ENCODE measurements at regions of chr6 and their contacts with region 1.

Region 1: DNA sequence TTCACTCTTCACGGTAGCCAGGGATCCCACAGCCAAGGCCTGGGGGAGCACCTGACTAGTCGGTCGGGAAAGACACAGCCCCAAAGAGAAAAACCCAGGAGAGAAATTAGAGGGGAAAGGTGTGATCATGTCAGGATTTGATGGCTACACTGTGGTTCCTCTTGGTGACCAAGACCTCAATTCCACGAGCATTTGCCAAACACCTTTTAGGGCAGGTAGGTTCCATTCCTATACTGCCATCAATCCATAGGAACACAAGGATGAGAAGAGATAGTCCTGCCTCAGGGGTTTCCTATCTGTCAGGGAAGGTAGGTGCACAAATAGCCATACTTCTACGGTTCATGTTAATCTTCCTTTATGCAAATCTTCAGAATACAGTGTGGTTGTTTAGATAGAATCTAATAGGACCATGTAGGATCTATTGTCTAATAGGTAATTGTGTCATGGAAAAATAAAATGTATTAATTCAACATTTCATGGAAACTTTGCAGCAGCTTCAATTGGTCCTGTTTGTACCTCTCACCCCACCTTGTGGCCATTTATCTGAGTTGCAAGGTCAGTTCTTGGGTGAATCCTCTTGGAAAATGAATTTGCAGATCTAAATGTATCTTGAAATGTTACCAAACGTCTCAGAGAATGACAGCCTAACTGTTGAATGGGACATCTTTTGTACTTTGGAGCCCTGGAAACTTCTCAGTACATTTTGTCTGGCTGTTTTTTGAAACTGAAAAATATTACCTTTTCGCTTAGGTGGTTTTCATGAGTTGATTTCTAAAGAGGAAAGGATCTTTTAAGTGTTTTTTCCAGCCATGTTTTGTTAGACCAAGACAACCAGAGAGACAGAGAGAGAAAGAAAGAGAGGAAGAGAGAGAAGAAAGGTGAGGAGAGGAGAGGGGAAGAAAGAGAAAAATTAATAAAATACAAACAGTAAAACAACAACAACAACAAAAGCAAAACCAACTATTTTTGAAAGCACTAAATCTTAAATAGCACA is 33.7 kb upstream of the IYD start:
- DNase-seq: peak in 4 of 14 experiments; percentile 14 to 56 (median 52)
- ATAC-seq: no peak
- H3K4me3 ChIP-seq: no peak overlapping the region
- H3K4me3 Mint-ChIP-seq: no peak overlapping the region
- H3K27ac ChIP-seq: no peak overlapping the region
- H3K27ac Mint-ChIP-seq: no peak overlapping the region
- H3K4me1 ChIP-seq: no peaks in the 10 kb centered on the region
- H3K4me1 Mint-ChIP-seq: no peaks in the 10 kb centered on the region
- H3K27me3 ChIP-seq: peaks cover 0 to 1% of the 10 kb centered on the region in 2 experiments
- H3K27me3 Mint-ChIP-seq: peaks cover 24% of the 10 kb centered on the region
- CTCF ChIP-seq: peak; percentile 27

Region 2: DNA sequence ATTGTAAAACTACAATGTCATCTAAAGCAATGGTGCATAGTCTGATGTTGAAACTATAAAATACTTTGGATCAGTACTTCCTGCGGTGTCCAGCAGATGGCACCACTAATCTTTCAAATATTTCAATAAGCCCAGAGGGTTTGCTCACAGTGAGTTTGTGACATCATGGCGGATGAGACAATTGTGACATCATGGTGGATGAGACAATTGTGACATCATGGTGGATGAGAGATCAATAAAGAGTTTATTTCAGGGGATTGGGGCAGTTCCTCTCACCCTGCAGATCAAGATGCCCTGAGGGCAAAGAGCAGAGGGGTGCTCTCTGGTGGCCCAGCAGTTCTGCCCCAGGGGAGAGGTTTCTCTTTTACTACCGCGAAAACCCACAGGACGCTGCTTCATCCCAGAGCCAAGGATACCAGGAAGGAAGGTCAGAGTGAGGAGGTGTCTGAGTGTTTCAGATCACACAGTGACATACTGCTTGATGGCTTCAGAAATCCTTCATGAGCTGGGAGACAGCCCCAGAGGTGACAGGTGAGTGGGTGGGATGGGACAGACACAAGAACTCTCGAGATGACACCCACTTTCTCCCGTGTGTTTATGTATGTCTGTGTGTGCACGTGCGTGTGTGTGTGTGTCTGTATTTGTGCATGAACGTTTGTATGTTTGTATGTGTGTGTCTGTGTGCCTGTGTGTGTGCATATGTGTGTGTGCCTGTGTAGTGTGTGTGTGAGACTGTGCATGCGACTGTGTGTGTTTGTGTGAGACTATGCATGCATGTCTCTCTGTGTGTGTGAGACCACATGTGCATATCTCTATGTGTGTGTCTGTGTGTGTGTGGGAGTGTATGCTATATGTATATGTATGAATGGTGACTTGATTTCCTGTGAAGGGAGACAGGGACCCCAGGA is 400.6 kb before region 1 on chr6:
- CTCF ChIA-PET with region 1: no interaction called
- POLR2A ChIA-PET with region 1: no interaction called
- intact Hi-C with region 1: loop called in 1 of 2 experiments (anchors 10 kb)
- DNase-seq: peak; percentile 50 to 88 (median 66)
- ATAC-seq: peak; percentile 67
- H3K4me3 ChIP-seq: no peak overlapping the region
- H3K4me3 Mint-ChIP-seq: peak overlapping the region; percentile 7
- H3K27ac ChIP-seq: no peak overlapping the region
- H3K27ac Mint-ChIP-seq: no peak overlapping the region
- H3K4me1 ChIP-seq: peaks cover 20% of the 10 kb centered on the region
- H3K4me1 Mint-ChIP-seq: peaks cover 14% of the 10 kb centered on the region
- H3K27me3 ChIP-seq: peaks cover 56 to 85% of the 10 kb centered on the region in 2 experiments
- H3K27me3 Mint-ChIP-seq: peaks cover 91% of the 10 kb centered on the region
- CTCF ChIP-seq: peak; percentile 89

Region 3: DNA sequence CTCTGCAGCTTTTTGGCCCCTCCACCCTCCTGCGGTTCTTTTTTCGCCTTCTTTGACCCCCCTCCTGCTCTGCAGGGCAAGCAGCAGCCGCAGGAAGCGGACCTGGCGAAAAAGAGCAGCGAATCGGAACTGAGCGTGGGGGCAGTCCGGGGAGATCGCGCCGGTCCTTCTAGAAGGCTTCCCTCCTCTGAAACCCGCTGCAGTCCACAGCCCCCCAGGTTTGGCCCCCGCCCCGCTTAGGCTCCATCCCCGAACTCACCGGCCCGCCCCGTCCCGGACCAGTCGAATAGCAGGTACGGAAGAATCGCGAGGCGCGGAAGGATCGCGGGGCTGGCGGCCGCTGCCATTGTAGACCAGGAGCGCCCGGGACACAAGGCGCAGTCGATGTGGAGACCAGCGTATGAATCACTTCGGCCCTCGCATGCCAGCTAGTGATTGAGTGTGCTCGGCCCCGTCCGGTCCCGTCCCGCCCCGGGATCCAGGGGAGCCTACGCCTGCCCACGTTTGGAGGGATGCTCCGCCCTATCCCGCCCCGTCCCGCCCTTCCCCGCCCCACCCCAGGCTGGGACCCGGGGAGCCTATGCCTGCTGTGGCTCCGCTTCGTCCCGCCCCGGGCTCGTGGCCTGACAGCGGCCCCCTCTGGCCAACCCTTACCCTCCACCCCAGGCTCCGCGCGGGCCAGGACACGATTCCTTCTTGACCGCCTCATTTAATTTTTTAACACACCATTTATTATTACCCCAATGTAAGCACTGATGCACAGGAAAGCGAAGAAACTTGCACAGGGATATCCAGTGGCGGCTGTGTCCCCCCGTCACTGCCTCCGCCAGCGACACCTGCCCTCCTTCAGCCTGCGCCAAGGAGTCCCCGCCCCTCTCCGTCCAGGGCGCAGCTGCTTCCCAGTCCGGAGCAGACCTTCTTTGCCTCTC is 266.1 kb before region 1 on chr6 and contains the start of gene ULBP3:
- CTCF ChIA-PET with region 1: no interaction called
- POLR2A ChIA-PET with region 1: no interaction called
- intact Hi-C with region 1: loop called in 1 of 2 experiments (anchors 5 kb)
- DNase-seq: peak; percentile 29 to 82 (median 53)
- ATAC-seq: peak; percentile 72
- H3K4me3 ChIP-seq: peak within 1 kb of the TSS; percentile 72
- H3K4me3 Mint-ChIP-seq: peak within 1 kb of the TSS; percentile 94
- H3K27ac ChIP-seq: no peak within 1 kb of the TSS
- H3K27ac Mint-ChIP-seq: no peak within 1 kb of the TSS
- H3K4me1 ChIP-seq: peaks cover 30% of the 10 kb centered on the region
- H3K4me1 Mint-ChIP-seq: peaks cover 20% of the 10 kb centered on the region
- H3K27me3 ChIP-seq: no peaks in the 10 kb centered on the region
- H3K27me3 Mint-ChIP-seq: peaks cover 19% of the 10 kb centered on the region
- CTCF ChIP-seq: peak; percentile 17
- total RNA-seq, gene ULBP3: 0.44 TPM in 1 of 2 experiments, not detected in the other

Region 4: GRCh38 chr6:150079604-150080003 is 255.5 kb before region 1 on chr6:
- CTCF ChIA-PET with region 1: no interaction called
- POLR2A ChIA-PET with region 1: no interaction called
- intact Hi-C with region 1: loop called (anchors 5 kb)
- DNase-seq: peak in 5 of 14 experiments; percentile 19 to 64 (median 61)
- ATAC-seq: peak; percentile 75
- H3K4me3 ChIP-seq: no peak overlapping the region
- H3K4me3 Mint-ChIP-seq: peak overlapping the region; percentile 74
- H3K27ac ChIP-seq: no peak overlapping the region
- H3K27ac Mint-ChIP-seq: no peak overlapping the region
- H3K4me1 ChIP-seq: peaks cover 13% of the 10 kb centered on the region
- H3K4me1 Mint-ChIP-seq: peaks cover 25% of the 10 kb centered on the region
- H3K27me3 ChIP-seq: peaks cover 0 to 3% of the 10 kb centered on the region in 2 experiments
- H3K27me3 Mint-ChIP-seq: peaks cover 34% of the 10 kb centered on the region
- CTCF ChIP-seq: no peak

Measured in CD4-positive, alpha-beta T cell (primary cell).